Activated B cell treated with CpG ODN at 0.5 μM for 24 hours (primary cell): ENCODE measurements at regions of chr3 and their contacts with region 1.

Region 1: DNA sequence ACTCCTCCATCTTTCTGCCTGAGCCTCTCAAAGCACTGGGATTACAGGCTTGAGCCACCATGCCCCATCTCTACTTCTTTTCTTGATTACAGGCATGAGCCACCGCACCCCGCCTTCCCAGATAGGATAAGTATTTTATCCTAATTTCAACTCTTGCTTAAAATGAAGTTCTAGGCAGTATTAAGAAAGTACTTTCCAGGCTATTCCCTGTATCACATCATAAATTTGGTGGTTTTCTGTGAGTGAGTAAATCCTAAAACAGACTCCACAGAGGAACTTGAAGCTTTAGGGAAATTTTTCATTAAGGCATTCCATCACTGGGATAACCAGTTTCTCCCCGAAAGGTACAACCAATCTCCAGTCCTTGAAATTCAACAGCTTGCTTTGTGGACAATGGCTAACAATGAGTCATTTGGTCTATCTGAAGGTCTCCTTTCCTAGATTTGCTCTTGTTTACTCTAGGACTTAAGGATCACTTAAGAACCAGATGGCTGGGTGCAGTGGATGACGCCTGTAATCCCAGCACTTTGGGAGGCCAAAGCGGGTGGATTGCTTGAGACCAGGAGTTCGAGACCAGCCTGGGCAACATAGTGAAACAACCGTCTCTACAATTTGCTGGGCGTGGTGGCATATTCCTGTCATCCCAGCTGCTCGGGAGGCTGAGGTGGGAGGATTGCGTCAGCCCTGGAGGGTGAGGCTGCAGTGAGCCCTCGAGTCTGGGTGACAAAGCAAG is 49.7 kb upstream of the SKIL start:
- DNase-seq: no peak
- ATAC-seq: no peak
- H3K4me3 Mint-ChIP-seq: no peak overlapping the region
- H3K27ac Mint-ChIP-seq: no peak overlapping the region
- H3K4me1 Mint-ChIP-seq: peaks cover 10% of the 10 kb centered on the region
- H3K27me3 Mint-ChIP-seq: no peaks in the 10 kb centered on the region
- CTCF ChIP-seq: no peak

Region 2: GRCh38 chr3:170189398-170190256 is 118.2 kb before region 1 on chr3:
- CTCF ChIA-PET with region 1: no interaction called
- POLR2A ChIA-PET with region 1: no interaction called
- intact Hi-C with region 1: loop called (anchors 1 kb)
- DNase-seq: no peak
- ATAC-seq: peak; percentile 7
- H3K4me3 Mint-ChIP-seq: no peak overlapping the region
- H3K27ac Mint-ChIP-seq: no peak overlapping the region
- H3K4me1 Mint-ChIP-seq: peaks cover 7% of the 10 kb centered on the region
- H3K27me3 Mint-ChIP-seq: no peaks in the 10 kb centered on the region
- CTCF ChIP-seq: no peak

Region 3: GRCh38 chr3:170368921-170369320 is 61.1 kb after region 1 on chr3:
- CTCF ChIA-PET with region 1: interaction called, 4 read pairs
- POLR2A ChIA-PET with region 1: interaction called, 11 read pairs
- intact Hi-C with region 1: loop called (anchors 1 kb)
- DNase-seq: no peak
- ATAC-seq: no peak
- H3K4me3 Mint-ChIP-seq: no peak overlapping the region
- H3K27ac Mint-ChIP-seq: peak overlapping the region; percentile 46
- H3K4me1 Mint-ChIP-seq: peaks cover 70% of the 10 kb centered on the region
- H3K27me3 Mint-ChIP-seq: no peaks in the 10 kb centered on the region
- CTCF ChIP-seq: no peak

Region 4: GRCh38 chr3:170387950-170388349 is 80.1 kb after region 1 on chr3:
- CTCF ChIA-PET with region 1: interaction called, 6 read pairs
- POLR2A ChIA-PET with region 1: no interaction called
- intact Hi-C with region 1: loop called (anchors 1 kb)
- DNase-seq: no peak
- ATAC-seq: no peak
- H3K4me3 Mint-ChIP-seq: no peak overlapping the region
- H3K27ac Mint-ChIP-seq: no peak overlapping the region
- H3K4me1 Mint-ChIP-seq: peaks cover 26% of the 10 kb centered on the region
- H3K27me3 Mint-ChIP-seq: no peaks in the 10 kb centered on the region
- CTCF ChIP-seq: no peak

Region 5: DNA sequence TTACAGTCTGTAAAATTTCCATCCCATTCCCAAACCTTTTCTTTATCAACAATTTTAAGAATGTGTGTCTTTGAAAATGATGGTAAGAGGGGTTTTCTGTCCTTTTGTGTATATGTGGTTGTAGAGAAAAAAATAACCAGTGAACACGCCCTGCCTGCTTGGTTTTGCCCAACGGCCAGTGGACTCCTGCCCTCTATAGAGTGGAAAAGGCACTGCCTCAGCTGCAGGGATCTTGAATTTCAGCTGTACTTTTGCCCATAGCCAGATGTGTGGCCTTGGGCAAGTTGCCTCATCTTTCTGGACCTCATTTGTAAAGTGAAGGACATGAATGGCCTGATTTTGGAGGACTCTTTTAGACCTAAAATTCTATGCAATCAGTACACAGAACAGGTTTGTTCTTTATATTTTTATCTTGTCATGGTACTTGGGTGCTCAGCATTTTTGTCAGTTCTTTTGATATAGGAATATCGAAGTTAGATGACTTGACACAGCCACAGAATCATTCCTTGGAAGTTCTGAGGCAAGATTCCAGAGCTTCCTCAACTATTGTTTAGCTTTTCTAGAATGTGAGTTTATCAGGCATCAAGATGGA is 191.8 kb after region 1 on chr3:
- CTCF ChIA-PET with region 1: no interaction called
- POLR2A ChIA-PET with region 1: no interaction called
- intact Hi-C with region 1: loop called (anchors 2 kb)
- DNase-seq: no peak
- ATAC-seq: no peak
- H3K4me3 Mint-ChIP-seq: no peak overlapping the region
- H3K27ac Mint-ChIP-seq: no peak overlapping the region
- H3K4me1 Mint-ChIP-seq: no peaks in the 10 kb centered on the region
- H3K27me3 Mint-ChIP-seq: peaks cover 20% of the 10 kb centered on the region
- CTCF ChIP-seq: no peak

Region 6: GRCh38 chr3:170689893-170690660 is 382.2 kb after region 1 on chr3:
- CTCF ChIA-PET with region 1: interaction called, 4 read pairs
- POLR2A ChIA-PET with region 1: no interaction called
- intact Hi-C with region 1: loop called (anchors 1 kb)
- DNase-seq: peak; percentile 28
- ATAC-seq: peak; percentile 54
- H3K4me3 Mint-ChIP-seq: no peak overlapping the region
- H3K27ac Mint-ChIP-seq: no peak overlapping the region
- H3K4me1 Mint-ChIP-seq: no peaks in the 10 kb centered on the region
- H3K27me3 Mint-ChIP-seq: peaks cover 3% of the 10 kb centered on the region
- CTCF ChIP-seq: no peak

Region 7: GRCh38 chr3:170811928-170812591 is 504.2 kb after region 1 on chr3:
- CTCF ChIA-PET with region 1: interaction called, 11 read pairs
- POLR2A ChIA-PET with region 1: no interaction called
- intact Hi-C with region 1: loop called (anchors 1 kb)
- DNase-seq: peak; percentile 30
- ATAC-seq: peak; percentile 97
- H3K4me3 Mint-ChIP-seq: no peak overlapping the region
- H3K27ac Mint-ChIP-seq: no peak overlapping the region
- H3K4me1 Mint-ChIP-seq: no peaks in the 10 kb centered on the region
- H3K27me3 Mint-ChIP-seq: no peaks in the 10 kb centered on the region
- CTCF ChIP-seq: peak; percentile 84